GM12878 (cell line): ENCODE measurements at regions of chr19 and their contacts with region 1.

Region 1: GRCh38 chr19:58513694-58514563 is 2.1 kb upstream of the SLC27A5 start:
- DNase-seq: peak; percentile 85
- ATAC-seq: peak; percentile 95
- H3K4me3 ChIP-seq: peak overlapping the region; percentile 72
- H3K27ac ChIP-seq: peak overlapping the region; percentile 91
- H3K4me1 ChIP-seq: peaks cover 23% of the 10 kb centered on the region
- H3K27me3 ChIP-seq: no peaks in the 10 kb centered on the region
- CTCF ChIP-seq: peak; percentile 80 to 99 (median 98); a peak in 5 of 6 replicates
- EP300 ChIP-seq: no peak
- POLR2A ChIP-seq: peak; percentile 88
- RAD21 ChIP-seq: peak; percentile 66

Region 2: GRCh38 chr19:58434217-58434616 is 79.7 kb before region 1 on chr19:
- CTCF ChIA-PET with region 1: no interaction called
- POLR2A ChIA-PET with region 1: no interaction called
- RAD21 ChIA-PET with region 1: no interaction called
- SMC1A ChIA-PET with region 1: no interaction called
- in situ Hi-C with region 1: no loop called
- intact Hi-C with region 1: no loop called
- DNase-seq: no peak
- ATAC-seq: no peak
- H3K4me3 ChIP-seq: no peak overlapping the region
- H3K27ac ChIP-seq: no peak overlapping the region
- H3K4me1 ChIP-seq: peaks cover 3% of the 10 kb centered on the region; the same call in 1 of the 2 replicates
- H3K27me3 ChIP-seq: no peaks in the 10 kb centered on the region
- CTCF ChIP-seq: no peak
- EP300 ChIP-seq: no peak
- POLR2A ChIP-seq: no peak
- RAD21 ChIP-seq: no peak

Region 3: DNA sequence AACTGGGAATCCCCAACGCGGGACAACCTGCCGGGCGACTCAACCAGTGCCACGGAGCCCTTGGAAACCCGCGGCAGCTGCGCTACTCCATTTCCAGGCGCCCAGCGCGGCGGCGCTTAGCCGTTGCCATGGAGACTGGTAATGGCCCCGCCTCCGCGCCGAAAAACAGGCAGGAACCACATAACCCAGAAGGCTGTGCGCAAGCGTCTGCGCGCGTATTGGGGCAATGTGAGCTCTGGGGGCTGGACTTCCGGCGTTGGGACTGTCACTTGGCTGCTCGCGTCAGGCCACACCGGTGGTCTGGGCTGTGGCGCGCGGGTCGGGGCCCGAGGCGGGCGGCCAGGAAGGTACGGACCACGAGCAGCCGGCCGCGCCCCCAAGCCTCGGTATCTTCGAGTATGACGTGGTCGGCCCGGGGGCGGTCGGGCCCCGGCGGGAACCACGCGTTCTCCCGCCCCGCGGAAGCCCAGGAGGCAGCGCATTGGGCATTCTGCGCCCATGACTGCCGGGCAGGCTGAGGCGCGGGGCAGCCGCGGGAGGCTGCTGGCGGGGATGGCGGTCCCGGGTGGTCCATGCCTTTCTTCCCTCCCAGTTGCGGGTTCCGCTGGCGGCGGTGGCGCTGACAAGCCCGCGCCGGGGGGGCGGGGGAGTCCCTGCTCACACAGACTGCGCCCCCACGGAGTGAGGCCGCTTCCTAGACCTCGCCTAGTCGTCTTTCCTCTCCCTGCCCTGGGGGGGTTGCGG is 62.4 kb before region 1 on chr19 and contains the start of gene ZNF324B:
- CTCF ChIA-PET with region 1: no interaction called
- POLR2A ChIA-PET with region 1: no interaction called
- RAD21 ChIA-PET with region 1: no interaction called
- SMC1A ChIA-PET with region 1: no interaction called
- in situ Hi-C with region 1: no loop called
- intact Hi-C with region 1: no loop called
- DNase-seq: peak; percentile 71
- ATAC-seq: peak; percentile 99
- H3K4me3 ChIP-seq: peak within 1 kb of the TSS; percentile 82
- H3K27ac ChIP-seq: peak within 1 kb of the TSS; percentile 22; the same call in 1 of the 2 replicates
- H3K4me1 ChIP-seq: peaks cover 4% of the 10 kb centered on the region; the same call in 1 of the 2 replicates
- H3K27me3 ChIP-seq: no peaks in the 10 kb centered on the region
- CTCF ChIP-seq: no peak
- EP300 ChIP-seq: no peak
- POLR2A ChIP-seq: peak; percentile 85
- RAD21 ChIP-seq: no peak
- polyA plus RNA-seq, gene ZNF324B: 0.11 to 0.29 TPM

Region 4: DNA sequence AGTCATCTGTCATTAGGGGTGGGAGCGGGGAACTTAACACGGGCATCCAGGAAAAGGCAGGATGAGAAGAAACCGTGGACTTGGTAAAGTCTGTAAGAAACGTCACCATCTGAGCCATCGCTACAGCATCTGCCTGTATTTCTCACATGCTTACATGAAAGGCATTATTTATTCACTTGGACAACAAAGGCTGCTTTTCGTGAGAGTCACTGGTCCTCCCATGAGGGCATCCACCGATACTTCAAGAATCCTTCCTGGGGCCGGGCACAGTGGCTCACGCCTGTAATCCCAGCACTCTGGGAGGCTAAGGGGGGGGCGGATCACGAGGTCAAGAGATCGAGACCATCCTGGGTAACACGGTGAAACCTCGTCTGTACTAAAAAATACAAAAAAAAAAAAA is 21.7 kb before region 1 on chr19:
- CTCF ChIA-PET with region 1: interaction called, 18 read pairs
- POLR2A ChIA-PET with region 1: interaction called, 14 read pairs
- RAD21 ChIA-PET with region 1: interaction called, 6 read pairs
- SMC1A ChIA-PET with region 1: interaction called, 4 read pairs
- in situ Hi-C with region 1: no loop called
- intact Hi-C with region 1: no loop called
- DNase-seq: no peak
- ATAC-seq: no peak
- H3K4me3 ChIP-seq: no peak overlapping the region
- H3K27ac ChIP-seq: no peak overlapping the region
- H3K4me1 ChIP-seq: peaks cover 25% of the 10 kb centered on the region
- H3K27me3 ChIP-seq: no peaks in the 10 kb centered on the region
- CTCF ChIP-seq: no peak
- EP300 ChIP-seq: no peak
- POLR2A ChIP-seq: no peak
- RAD21 ChIP-seq: no peak

Region 5: DNA sequence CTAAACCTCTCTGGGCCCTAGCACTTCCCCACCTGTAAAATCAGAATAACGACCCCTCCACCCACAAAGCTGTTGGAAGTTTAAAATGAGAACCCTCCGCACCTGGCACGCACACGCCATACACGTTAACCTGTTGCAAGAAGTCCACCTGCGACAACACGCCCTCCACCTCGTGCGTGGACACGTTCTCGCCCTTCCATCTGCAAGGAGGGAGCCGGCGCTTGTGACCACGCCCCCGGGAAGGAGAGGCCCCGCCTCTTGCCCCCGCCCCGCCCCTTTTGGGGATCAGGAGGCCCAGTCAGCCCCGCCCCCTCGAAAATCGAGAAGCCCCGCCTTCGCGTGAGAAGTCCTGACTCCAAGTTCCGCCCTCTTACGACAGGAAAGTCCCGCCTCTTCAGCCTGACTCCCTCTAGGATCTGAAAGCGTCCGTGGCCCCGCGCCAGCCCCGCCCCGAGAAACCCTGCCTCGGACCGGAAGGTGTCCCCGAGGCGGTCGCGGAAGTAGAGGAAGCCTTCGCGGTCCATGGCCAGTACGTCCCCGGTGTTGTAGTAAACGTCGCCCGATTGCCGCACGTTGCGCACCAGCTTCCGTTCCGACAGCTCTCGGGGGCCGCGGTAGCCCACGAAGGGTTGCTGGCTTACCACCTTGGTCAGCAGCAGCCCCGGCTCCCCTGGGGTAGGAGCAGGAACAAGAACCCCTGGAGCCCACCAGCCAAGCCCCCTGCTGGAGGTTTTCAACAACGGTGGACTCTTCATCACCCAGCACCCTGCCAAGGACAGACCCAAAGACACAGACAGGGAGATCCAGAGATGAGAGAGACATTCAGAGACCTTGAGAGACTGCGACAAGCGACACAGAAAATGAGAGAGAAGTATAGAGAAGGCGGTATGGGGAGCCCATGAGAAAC is 14.7 kb before region 1 on chr19:
- CTCF ChIA-PET with region 1: interaction called, 24 read pairs
- POLR2A ChIA-PET with region 1: no interaction called
- RAD21 ChIA-PET with region 1: interaction called, 4 read pairs
- SMC1A ChIA-PET with region 1: interaction called, 3 read pairs
- in situ Hi-C with region 1: no loop called
- intact Hi-C with region 1: no loop called
- DNase-seq: peak; percentile 89
- ATAC-seq: peak; percentile 99
- H3K4me3 ChIP-seq: peak overlapping the region; percentile 80
- H3K27ac ChIP-seq: peak overlapping the region; percentile 87
- H3K4me1 ChIP-seq: peaks cover 11% of the 10 kb centered on the region
- H3K27me3 ChIP-seq: no peaks in the 10 kb centered on the region
- CTCF ChIP-seq: peak in 1 of 3 experiments; percentile 34; a peak in 2 of 6 replicates
- EP300 ChIP-seq: no peak
- POLR2A ChIP-seq: peak; percentile 88
- RAD21 ChIP-seq: 0 out of 2 replicates have a peak, but pooled peaks have one; percentile 16

Region 6: GRCh38 chr19:58581227-58582151 is 67.6 kb after region 1 on chr19:
- CTCF ChIA-PET with region 1: interaction called, 67 read pairs
- POLR2A ChIA-PET with region 1: interaction called, 5 read pairs
- RAD21 ChIA-PET with region 1: interaction called, 50 read pairs
- SMC1A ChIA-PET with region 1: interaction called, 43 read pairs
- in situ Hi-C with region 1: no loop called
- intact Hi-C with region 1: no loop called
- DNase-seq: no peak
- ATAC-seq: peak; percentile 91
- H3K4me3 ChIP-seq: no peak overlapping the region
- H3K27ac ChIP-seq: no peak overlapping the region
- H3K4me1 ChIP-seq: peaks cover 20% of the 10 kb centered on the region
- H3K27me3 ChIP-seq: no peaks in the 10 kb centered on the region
- CTCF ChIP-seq: peak; percentile 70 to 99 (median 87)
- EP300 ChIP-seq: no peak
- POLR2A ChIP-seq: no peak
- RAD21 ChIP-seq: no peak